ENCODE measurements at regions of chr2 and their contacts with region 1.

Region 1: DNA sequence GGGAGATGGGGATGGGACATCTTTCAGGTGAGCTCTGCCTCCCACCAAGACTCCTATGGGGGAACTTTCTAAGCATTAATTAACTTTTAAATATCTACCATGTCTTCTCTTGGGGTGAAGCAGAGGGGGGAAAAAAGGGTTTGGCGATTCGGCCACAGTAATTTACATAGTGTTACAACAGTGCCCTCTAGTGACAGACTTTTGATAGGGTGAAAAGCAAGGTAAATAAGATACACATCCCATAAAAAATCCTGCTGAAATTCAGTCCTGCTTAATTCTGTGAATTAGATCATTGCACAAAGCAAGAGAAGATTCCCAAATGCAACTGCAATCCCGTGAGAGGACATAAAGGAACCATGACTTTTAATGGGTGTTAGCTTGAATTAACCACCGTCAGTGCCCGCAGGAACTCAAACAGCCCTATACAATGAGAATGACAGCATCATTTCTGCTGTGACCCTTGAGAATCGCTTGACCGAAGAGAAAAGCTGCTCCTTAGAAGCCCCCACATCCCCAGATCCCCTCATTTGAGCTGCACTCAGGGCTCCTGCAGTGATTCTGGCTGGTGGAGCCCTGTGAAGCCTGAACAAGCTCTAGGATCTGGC is 32.8 kb downstream of the FAM124B start:
- DNase-seq: peak; percentile 14
- H3K4me3 Mint-ChIP-seq: no peak overlapping the region
- H3K27ac Mint-ChIP-seq: no peak overlapping the region
- H3K4me1 Mint-ChIP-seq: no peaks in the 10 kb centered on the region
- H3K27me3 Mint-ChIP-seq: no peaks in the 10 kb centered on the region

Region 2: GRCh38 chr2:224401641-224402342 is 32.7 kb after region 1 on chr2 and contains the start of gene FAM124B:
- CTCF ChIA-PET with region 1: interaction called, 13 read pairs
- intact Hi-C with region 1: no loop called
- DNase-seq: peak; percentile 71
- H3K4me3 Mint-ChIP-seq: peak within 1 kb of the TSS; percentile 70
- H3K27ac Mint-ChIP-seq: peak within 1 kb of the TSS; percentile 46
- H3K4me1 Mint-ChIP-seq: peaks cover 13% of the 10 kb centered on the region
- H3K27me3 Mint-ChIP-seq: peaks cover 8% of the 10 kb centered on the region
- total RNA-seq, gene FAM124B: 0.32 to 0.43 TPM

Region 3: DNA sequence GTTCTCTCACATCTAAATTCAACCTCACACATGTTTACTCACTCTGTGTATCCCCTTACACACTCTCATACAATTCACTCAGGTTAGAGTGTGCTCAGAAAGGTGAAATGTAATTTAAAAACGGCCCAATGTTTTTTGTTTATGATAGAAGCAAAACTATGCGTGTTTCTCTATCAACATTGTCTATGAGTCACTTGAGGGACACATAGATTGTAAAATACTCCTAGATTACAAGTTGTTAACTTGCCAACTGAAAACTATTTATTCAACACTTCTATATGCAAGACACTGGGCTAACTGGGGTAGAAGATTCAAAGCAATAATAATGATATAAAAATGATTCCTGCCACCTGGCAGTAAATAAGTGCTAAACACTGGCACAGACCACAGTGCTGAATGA is 322.4 kb after region 1 on chr2:
- CTCF ChIA-PET with region 1: no interaction called
- intact Hi-C with region 1: no loop called
- DNase-seq: no peak
- H3K4me3 Mint-ChIP-seq: no peak overlapping the region
- H3K27ac Mint-ChIP-seq: no peak overlapping the region
- H3K4me1 Mint-ChIP-seq: no peaks in the 10 kb centered on the region
- H3K27me3 Mint-ChIP-seq: no peaks in the 10 kb centered on the region